PC-3 (cell line): ENCODE measurements at regions of chr6 and their contacts with region 1.

Region 1: GRCh38 chr6:73451223-73452107 is 632 bp downstream of the CGAS start:
- DNase-seq: peak; percentile 35
- ATAC-seq: peak; percentile 60
- H3K4me3 ChIP-seq: peak overlapping the region; percentile 99
- H3K27ac ChIP-seq: peak overlapping the region; percentile 76
- H3K4me1 ChIP-seq: no peaks in the 10 kb centered on the region
- H3K27me3 ChIP-seq: no peaks in the 10 kb centered on the region
- CTCF ChIP-seq: no peak

Region 2: DNA sequence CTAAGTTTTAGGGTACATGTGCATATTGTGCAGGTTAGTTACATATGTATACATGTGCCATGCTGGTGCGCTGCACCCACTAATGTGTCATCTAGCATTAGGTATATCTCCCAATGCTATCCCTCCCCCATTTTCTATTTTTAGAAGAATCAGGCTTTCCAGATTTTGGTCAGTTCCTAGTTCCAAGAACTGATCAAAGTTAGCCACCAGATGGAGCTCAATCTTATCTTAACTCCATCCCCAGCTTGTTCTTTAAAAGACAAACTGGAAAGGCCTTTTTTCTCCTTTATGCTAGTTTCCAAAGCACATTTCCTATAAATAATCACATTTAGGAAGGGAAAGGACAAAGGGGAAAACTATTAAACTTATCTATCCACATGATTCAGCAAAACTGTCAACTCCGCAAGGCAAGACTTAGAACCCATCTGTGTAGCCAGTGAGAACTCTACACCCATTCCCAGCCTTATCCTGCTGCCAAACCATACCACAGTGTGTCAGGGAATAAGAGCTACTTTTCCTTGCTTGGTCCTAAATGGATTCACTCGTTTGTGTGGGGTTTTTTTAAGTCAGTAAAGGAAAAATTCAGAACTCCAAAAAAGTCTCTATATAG is 165.7 kb before region 1 on chr6:
- CTCF ChIA-PET with region 1: no interaction called
- POLR2A ChIA-PET with region 1: no interaction called
- intact Hi-C with region 1: no loop called
- DNase-seq: peak; percentile 60
- ATAC-seq: peak; percentile 68
- H3K4me3 ChIP-seq: no peak overlapping the region
- H3K27ac ChIP-seq: no peak overlapping the region
- H3K4me1 ChIP-seq: peaks cover 3% of the 10 kb centered on the region; the same call in 1 of the 2 replicates
- H3K27me3 ChIP-seq: no peaks in the 10 kb centered on the region
- CTCF ChIP-seq: peak; percentile 54

Region 3: GRCh38 chr6:73604020-73604419 is 152.6 kb after region 1 on chr6:
- CTCF ChIA-PET with region 1: no interaction called
- POLR2A ChIA-PET with region 1: interaction called, 11 read pairs
- intact Hi-C with region 1: no loop called
- DNase-seq: no peak
- ATAC-seq: no peak
- H3K4me3 ChIP-seq: no peak overlapping the region
- H3K27ac ChIP-seq: no peak overlapping the region
- H3K4me1 ChIP-seq: no peaks in the 10 kb centered on the region
- H3K27me3 ChIP-seq: no peaks in the 10 kb centered on the region
- CTCF ChIP-seq: no peak